Posterior vena cava (tissue), 2 donors: ENCODE measurements at regions of chr5 and their contacts with region 1.

Region 1: GRCh38 chr5:41869739-41870626 is at the start of gene OXCT1:
- DNase-seq: peak; percentile 95
- total RNA-seq, gene OXCT1: 44.0 to 44.2 TPM

Region 2: GRCh38 chr5:41918105-41918504 is 48.1 kb after region 1 on chr5:
- intact Hi-C with region 1: loop called (anchors 10 kb)
- DNase-seq: no peak

Region 3: DNA sequence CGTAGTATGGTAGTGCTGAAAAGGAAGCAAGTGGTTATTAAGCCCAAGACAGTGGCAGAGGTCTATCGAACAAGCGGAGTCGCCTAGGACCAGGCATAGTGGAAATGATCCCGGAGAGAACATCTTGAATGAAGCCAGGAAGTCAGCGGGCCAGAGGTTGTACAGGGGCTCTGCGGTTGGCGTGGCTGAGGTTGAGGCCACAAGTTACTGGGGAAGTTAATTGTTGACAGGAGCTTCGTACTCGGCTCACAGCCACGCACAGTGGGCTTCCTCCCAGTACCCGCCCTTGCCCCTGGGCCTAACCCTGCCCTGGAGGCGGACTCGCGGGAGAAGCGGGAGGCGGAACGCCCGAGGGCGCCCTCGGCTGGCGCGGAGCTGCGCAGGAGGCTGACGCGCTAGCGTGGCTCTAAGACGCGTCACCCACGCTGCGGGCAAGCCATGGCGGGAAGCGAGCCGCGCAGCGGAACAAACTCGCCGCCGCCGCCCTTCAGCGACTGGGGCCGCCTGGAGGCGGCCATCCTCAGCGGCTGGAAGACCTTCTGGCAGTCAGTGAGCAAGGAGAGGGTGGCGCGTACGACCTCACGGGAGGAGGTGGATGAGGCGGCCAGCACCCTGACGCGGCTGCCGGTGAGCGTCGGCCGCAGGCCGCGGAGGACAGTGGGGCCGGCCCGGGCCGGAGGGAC is 55.0 kb after region 1 on chr5 and contains the start of gene FBXO4:
- intact Hi-C with region 1: loop called in 1 of 2 experiments (anchors 10 kb)
- DNase-seq: peak; percentile 97
- total RNA-seq, gene FBXO4: 10.9 to 14.3 TPM